ENCODE measurements at regions of chr7 and their contacts with region 1.

Region 1: DNA sequence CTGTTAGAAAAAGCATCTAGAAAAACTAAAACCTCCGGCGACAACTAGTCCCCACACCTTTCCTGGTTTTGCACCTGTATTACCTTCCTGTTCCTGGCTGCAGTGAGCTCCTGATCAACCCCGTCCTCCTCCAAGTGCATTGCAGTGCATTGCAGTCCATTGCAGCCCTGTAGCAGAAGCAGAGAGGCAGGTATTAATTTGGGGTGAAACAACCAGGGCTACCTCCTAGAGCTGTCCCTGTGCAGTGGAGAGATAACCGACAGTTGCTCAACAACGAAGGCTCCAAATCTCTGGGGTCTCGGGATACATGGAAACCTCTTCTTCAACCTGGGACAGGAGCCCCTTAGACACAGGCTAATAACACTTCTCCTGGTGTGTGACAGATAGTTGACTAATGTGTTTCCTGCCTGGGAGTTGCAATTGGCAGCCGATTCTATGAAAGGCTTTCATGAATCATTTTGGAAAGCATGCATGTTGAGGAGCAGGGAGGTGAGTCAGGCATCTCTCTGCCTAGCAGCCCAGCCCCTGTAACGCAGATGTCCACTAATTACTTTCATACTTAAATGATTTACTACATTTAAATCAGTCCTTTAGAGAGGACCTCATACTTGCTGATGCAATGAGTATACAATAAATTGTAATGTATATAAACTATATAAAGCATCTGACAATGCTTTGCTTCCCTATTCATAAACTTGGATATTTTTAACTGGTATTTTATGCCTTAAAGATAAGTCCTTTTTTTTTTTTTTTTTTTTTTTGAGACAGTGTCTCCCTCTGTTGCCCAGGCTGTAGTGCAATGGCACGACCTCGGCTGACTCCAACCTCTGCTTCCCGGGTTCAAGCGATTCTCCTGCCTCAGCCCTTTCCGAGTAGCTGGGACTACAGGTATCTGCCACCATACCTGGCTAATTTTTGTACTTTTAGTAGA is 59.0 kb downstream of the PRR15 start:
- DNase-seq: peak; percentile 75 to 98
- H3K4me3 ChIP-seq: peak overlapping the region; percentile 24; the same call in 1 of the 2 replicates
- H3K27ac ChIP-seq: peak overlapping the region; percentile 91
- H3K4me1 ChIP-seq: peaks cover 49% of the 10 kb centered on the region
- H3K27me3 ChIP-seq: no peaks in the 10 kb centered on the region
- CTCF ChIP-seq: 0 out of 2 replicates have a peak, but pooled peaks have one; percentile 19

Region 2: GRCh38 chr7:29684787-29685650 is 62.4 kb after region 1 on chr7:
- CTCF ChIA-PET with region 1: no interaction called
- POLR2A ChIA-PET with region 1: no interaction called
- intact Hi-C with region 1: loop called (anchors 5 kb)
- DNase-seq: peak; percentile 48 to 77
- H3K4me3 ChIP-seq: peak overlapping the region; percentile 97
- H3K27ac ChIP-seq: peak overlapping the region; percentile 64
- H3K4me1 ChIP-seq: peaks cover 44% of the 10 kb centered on the region
- H3K27me3 ChIP-seq: no peaks in the 10 kb centered on the region
- CTCF ChIP-seq: no peak

Region 3: GRCh38 chr7:29723599-29723998 is 101.0 kb after region 1 on chr7:
- CTCF ChIA-PET with region 1: no interaction called
- POLR2A ChIA-PET with region 1: no interaction called
- intact Hi-C with region 1: loop called (anchors 5 kb)
- DNase-seq: peak in 1 of 2 experiments; percentile 11
- H3K4me3 ChIP-seq: no peak overlapping the region
- H3K27ac ChIP-seq: peak overlapping the region; percentile 58
- H3K4me1 ChIP-seq: peaks cover 30% of the 10 kb centered on the region
- H3K27me3 ChIP-seq: no peaks in the 10 kb centered on the region
- CTCF ChIP-seq: no peak

Region 4: DNA sequence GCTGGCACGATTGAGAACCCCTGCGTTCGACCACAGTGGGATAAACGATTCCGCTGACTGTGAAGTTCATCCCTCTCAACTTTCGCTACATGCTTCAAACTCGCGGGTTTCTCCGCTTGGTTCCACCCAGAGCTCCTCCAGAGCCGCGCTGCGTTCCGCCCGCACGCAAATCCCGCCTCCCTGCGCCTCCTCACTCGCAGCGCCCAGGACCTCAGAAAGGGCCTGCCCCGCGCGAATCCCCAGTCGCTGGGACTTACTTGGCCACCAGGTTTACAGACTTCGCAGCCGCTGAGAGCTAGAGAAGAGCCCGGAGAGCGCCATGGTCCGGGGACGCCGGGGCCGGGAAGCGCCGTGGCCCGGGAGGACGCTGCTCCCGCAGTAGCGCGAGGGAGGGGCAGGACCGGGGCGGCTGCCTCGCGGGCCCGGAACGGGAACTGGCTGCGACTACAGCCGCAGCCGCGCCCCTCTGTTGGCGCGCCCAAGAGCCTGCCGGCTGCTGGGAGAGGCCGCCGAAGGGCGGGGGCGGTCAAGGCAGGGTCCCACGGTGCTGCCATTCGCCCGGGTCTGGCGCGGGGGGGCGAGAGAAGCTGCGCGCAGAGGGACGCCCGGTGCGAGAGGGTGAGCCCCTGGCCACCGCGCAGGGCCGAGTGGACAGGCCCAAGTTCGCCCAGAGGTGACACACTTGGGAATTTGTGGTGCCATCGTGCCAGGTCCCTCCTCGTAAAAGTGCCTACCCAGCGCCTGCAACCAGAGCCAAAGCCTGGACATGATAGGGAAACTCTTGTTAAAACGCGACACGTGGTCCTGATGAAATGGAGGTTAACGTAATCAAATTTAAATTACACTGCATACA is 856.0 kb after region 1 on chr7 and contains the start of gene NOD1:
- CTCF ChIA-PET with region 1: no interaction called
- POLR2A ChIA-PET with region 1: no interaction called
- intact Hi-C with region 1: loop called (anchors 10 kb)
- DNase-seq: peak; percentile 73 to 85
- H3K4me3 ChIP-seq: peak within 1 kb of the TSS; percentile 73
- H3K27ac ChIP-seq: peak within 1 kb of the TSS; percentile 76
- H3K4me1 ChIP-seq: peaks cover 21% of the 10 kb centered on the region
- H3K27me3 ChIP-seq: no peaks in the 10 kb centered on the region
- CTCF ChIP-seq: no peak; the same call in 1 of the 2 replicates
- total RNA-seq, gene NOD1: 16.5 and 20.5 TPM in 2 replicates